ENCODE measurements at regions of chr1 and their contacts with region 1.

Region 1: DNA sequence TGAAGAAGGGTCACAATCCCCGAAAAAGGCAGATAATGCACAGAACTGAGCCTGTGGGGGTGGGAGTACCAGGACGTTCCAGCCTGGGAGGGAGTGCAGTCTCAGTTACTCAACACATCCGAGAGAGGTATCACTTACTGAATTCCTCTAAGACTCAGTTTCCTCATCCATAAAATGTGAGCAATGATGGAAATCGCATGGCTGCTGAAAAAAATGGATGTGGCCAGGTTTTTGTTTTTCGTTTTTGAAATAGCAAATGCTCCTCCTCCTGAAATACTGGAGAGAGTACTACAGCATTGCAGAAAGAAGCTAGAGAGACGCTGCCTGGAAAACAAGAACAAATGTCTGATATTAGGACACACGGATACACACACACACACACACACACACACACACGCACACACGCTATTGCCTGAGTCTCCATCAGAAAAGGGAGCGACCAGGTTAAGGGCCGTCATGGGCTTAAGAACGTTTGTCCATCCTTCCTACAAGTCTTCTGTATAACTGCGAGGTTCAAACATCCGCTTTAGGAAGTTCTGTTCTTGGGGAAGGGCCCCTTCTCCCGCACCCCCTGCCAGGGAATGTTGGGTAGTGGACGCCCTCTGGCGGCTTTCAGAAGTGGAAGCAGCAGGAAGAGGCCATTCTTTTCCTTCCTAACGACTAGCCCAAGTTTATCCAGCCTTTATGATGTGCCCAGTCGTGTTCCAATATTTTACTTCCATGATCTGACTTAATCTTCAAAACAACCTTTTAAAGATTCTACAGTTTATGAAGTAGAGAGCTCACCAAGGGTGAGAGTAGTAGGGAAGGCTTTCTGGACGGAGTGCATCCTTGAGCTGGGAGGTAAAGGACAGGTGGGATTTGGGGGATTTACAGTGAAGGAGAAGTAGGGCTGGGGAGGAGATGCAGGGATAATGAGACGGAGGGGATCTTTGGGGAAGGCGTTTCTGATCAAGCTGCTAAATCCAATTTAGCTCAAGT is 699 bp upstream of the NES start:
- DNase-seq: peak; percentile 59
- H3K4me3 ChIP-seq: peak overlapping the region; percentile 32
- H3K27ac ChIP-seq: peak overlapping the region; percentile 25
- H3K4me1 ChIP-seq: peaks cover 8% of the 10 kb centered on the region
- H3K27me3 ChIP-seq: peaks cover 37% of the 10 kb centered on the region
- CTCF ChIP-seq: peak; percentile 63

Region 2: DNA sequence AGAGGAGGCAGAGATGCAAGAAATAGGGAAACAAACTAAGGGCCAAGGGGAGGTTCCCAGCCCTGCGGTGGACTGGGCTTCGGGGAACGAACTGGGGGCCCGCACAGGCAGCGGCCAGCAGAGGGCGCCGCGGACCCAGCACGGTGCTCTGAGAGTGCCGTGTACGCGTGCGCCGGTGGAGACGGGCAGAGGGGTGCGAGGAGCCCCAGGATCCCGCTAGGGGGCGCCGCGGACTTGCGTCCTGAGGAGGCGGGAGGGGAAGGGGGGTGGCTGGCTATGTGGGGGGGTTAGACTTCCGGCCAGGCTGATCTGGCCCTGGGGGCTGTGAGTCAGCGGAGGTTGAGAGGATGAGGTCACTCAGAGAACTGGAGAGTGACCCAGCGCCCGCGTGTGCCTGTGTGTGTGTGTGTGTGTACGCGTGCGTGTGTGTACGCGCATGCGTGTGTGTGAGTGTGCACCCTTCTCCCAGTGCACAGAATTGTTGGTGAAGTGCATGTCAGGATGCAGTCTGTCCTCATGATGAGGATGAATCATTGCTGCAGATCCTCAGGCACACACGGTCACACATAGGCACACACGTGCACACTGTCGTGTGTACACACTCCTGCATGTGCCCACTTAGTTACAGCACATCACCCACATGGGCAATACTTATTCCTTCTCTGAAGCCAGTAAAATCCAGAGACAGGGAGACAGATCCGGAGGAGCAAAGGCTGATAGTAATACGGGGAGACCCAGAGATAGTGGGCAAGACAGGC is 17.7 kb before region 1 on chr1:
- intact Hi-C with region 1: loop called (anchors 2 kb)
- DNase-seq: peak; percentile 96
- H3K4me3 ChIP-seq: peak overlapping the region; percentile 30
- H3K27ac ChIP-seq: peak overlapping the region; percentile 82
- H3K4me1 ChIP-seq: peaks cover 38% of the 10 kb centered on the region
- H3K27me3 ChIP-seq: no peaks in the 10 kb centered on the region
- CTCF ChIP-seq: peak; percentile 99

Region 3: DNA sequence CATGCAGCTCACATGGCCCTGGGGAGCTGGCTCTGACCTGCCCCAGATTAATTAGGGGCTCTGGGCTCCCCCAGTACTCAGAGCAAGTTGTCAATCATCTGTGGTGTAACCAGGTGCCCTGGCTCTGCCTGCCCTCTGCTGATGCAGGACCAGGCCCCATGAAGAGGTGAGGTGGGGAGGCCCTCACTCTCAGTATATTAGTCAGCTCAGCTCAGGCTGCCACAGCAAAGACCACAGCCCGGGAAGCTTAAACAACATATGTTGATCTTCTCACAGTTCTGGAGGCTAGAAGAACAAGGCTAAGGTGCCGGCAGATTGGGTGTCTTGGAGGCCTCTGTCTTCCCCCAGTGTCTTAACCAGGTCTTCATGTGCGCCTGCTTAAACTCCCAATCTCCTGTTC is 807.9 kb after region 1 on chr1:
- intact Hi-C with region 1: no loop called
- DNase-seq: no peak
- H3K4me3 ChIP-seq: no peak overlapping the region
- H3K27ac ChIP-seq: no peak overlapping the region
- H3K4me1 ChIP-seq: no peaks in the 10 kb centered on the region
- H3K27me3 ChIP-seq: no peaks in the 10 kb centered on the region
- CTCF ChIP-seq: no peak

Measured in colonic mucosa (tissue), 4 donors.